CD8-positive, alpha-beta T cell (primary cell): ENCODE measurements at regions of chr6 and their contacts with region 1.

Region 1: DNA sequence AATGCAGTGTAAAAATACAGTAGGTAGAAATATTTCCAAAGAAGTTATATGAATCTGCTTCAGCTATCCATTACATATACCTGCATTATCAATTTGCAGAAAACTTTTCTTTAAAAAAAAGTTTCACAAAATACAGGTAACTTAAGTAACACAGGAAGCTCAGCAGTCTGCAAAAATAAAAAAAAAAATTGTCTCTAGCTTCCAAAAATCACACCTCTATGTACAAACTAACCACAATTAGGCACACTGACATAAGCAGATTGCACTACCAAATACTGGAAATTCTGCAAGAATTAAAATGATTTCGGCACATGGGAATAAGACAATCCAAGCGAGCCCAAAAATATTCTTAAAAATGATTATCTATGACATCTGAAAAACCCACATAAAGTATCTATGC is 41.2 kb downstream of the ME1 start:
- DNase-seq: peak in 1 of 9 experiments; percentile 8
- ATAC-seq: no peak
- H3K4me3 ChIP-seq: no peak overlapping the region
- H3K4me3 Mint-ChIP-seq: no peak overlapping the region
- H3K27ac ChIP-seq: no peak overlapping the region
- H3K27ac Mint-ChIP-seq: no peak overlapping the region
- H3K4me1 ChIP-seq: no peaks in the 10 kb centered on the region
- H3K4me1 Mint-ChIP-seq: no peaks in the 10 kb centered on the region
- H3K27me3 ChIP-seq: no peaks in the 10 kb centered on the region
- H3K27me3 Mint-ChIP-seq: no peaks in the 10 kb centered on the region
- CTCF ChIP-seq: no peak

Region 2: DNA sequence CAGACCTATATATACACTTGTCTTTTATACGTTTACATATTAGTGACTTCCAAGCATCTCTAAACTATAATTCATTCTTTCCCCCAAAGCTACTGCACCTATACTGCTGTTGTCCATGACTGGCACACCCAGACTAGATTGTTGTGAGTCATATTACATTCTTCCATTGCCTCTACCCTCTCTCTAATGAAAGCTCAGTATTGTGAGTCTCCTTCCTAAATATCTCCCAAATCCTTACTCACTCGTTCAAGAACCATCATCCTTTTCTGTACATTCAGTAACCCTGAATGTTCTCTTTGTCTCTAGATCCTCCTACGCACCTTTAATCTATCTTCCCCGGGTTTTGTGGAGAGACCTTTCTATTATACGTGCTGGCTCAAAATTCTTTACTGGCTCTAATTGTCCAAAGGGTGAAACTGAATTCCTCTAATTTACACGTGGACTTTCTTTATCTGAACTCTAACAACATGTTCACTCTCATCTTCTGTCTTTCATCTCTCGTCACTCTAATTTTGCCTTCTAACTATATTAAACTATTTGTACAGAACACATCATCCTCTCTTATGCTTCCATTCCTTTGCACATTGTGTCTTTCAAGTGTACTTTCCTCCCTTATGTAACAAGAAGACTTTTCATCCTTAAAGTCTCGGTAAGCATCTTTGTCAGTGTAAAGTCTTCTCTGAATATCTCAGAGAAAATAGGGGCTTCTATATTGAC is 1251.4 kb before region 1 on chr6:
- CTCF ChIA-PET with region 1: no interaction called
- POLR2A ChIA-PET with region 1: no interaction called
- intact Hi-C with region 1: no loop called
- DNase-seq: no peak
- ATAC-seq: no peak
- H3K4me3 ChIP-seq: no peak overlapping the region
- H3K4me3 Mint-ChIP-seq: no peak overlapping the region
- H3K27ac ChIP-seq: no peak overlapping the region
- H3K27ac Mint-ChIP-seq: no peak overlapping the region
- H3K4me1 ChIP-seq: no peaks in the 10 kb centered on the region
- H3K4me1 Mint-ChIP-seq: no peaks in the 10 kb centered on the region
- H3K27me3 ChIP-seq: peaks cover 0 to 3% of the 10 kb centered on the region in 2 experiments
- H3K27me3 Mint-ChIP-seq: no peaks in the 10 kb centered on the region
- CTCF ChIP-seq: no peak

Region 3: DNA sequence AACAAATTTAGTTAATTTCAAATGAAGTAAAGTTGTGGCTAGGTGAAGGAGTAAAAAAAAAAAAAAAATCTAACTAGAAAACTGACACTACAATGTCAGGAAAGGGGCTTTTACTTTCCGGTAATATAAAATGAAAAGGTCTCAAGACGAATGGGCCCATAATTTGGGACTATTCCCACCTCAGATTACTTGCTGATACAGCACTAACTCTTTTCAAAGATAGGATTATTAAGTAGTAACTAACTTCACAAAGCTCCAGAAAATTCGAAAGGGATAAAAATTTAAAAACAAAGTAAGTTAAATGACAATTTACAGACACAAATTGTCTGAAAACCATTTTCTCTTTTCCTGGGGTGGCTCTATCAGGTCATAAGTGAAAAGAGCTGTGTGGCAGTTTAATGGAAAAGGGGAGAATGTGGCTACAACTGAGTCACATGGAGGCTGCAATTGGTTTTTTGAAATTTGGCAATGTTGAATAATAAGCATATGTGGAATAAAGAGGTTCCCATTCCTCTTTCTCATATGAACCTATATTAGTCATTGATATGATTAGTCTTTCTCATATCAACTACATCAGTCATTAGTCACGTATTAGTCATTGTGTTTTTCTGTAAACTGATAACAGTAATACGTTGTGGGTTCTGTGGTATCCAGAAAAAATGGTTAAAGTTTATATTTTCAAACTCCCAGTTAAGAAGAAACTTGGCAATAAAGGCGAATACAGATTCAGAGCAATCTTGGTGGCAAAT is 118.5 kb before region 1 on chr6:
- CTCF ChIA-PET with region 1: no interaction called
- POLR2A ChIA-PET with region 1: no interaction called
- intact Hi-C with region 1: no loop called
- DNase-seq: no peak
- ATAC-seq: no peak
- H3K4me3 ChIP-seq: no peak overlapping the region
- H3K4me3 Mint-ChIP-seq: no peak overlapping the region
- H3K27ac ChIP-seq: no peak overlapping the region
- H3K27ac Mint-ChIP-seq: no peak overlapping the region
- H3K4me1 ChIP-seq: no peaks in the 10 kb centered on the region
- H3K4me1 Mint-ChIP-seq: no peaks in the 10 kb centered on the region
- H3K27me3 ChIP-seq: no peaks in the 10 kb centered on the region
- H3K27me3 Mint-ChIP-seq: peaks cover 2% of the 10 kb centered on the region
- CTCF ChIP-seq: no peak

Region 4: DNA sequence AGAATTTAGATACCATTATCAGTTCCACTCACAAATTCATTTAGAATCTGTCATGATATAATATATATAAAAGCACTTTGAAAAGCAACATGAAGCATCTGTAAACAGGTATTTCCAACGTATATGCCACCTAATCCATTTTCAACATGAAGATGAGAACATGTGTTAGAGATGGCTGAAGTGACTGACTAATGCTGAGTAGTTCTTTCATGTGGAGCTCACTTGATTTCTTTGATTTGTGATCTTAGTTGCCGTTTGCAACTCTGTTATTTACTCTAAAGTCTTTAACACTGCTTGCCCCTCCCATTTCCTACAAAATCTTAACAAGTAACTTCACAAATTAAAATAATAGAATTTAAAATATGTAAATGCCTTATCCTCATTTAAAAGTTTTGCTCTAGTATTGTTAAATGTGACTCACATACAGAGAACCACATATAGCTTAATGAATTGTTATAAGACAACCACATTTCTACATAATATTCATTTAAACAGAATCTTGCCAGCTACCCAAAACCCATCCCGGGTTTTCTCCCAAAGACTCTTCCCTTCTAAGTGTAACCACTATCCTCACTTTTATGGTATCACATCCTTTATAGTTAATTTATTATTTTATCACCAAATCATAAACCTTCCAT is 37.1 kb before region 1 on chr6:
- CTCF ChIA-PET with region 1: no interaction called
- POLR2A ChIA-PET with region 1: no interaction called
- intact Hi-C with region 1: loop called in 1 of 2 experiments (anchors 1 kb)
- DNase-seq: no peak
- ATAC-seq: no peak
- H3K4me3 ChIP-seq: no peak overlapping the region
- H3K4me3 Mint-ChIP-seq: no peak overlapping the region
- H3K27ac ChIP-seq: no peak overlapping the region
- H3K27ac Mint-ChIP-seq: no peak overlapping the region
- H3K4me1 ChIP-seq: no peaks in the 10 kb centered on the region
- H3K4me1 Mint-ChIP-seq: no peaks in the 10 kb centered on the region
- H3K27me3 ChIP-seq: no peaks in the 10 kb centered on the region
- H3K27me3 Mint-ChIP-seq: no peaks in the 10 kb centered on the region
- CTCF ChIP-seq: no peak

Region 5: DNA sequence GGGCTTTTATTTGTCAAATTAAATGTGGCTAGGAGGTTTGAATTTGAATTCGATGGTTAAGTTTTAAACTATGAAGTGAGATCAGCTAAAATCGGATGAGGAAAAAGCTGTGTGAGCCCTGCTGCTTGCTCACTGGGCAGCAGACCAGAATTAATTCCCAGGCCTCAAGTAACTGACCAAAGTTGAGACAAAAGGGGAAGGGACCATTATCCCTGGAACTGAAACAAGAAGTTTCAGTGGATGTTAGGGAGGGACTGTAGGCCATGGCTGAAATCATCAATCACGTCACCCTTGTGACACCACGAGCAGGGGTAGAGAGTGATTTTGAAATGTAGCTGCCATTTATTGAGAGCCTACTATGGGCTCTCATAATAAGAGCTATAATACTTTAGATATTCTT is 115.8 kb after region 1 on chr6:
- CTCF ChIA-PET with region 1: no interaction called
- POLR2A ChIA-PET with region 1: no interaction called
- intact Hi-C with region 1: no loop called
- DNase-seq: no peak
- ATAC-seq: no peak
- H3K4me3 ChIP-seq: no peak overlapping the region
- H3K4me3 Mint-ChIP-seq: no peak overlapping the region
- H3K27ac ChIP-seq: no peak overlapping the region
- H3K27ac Mint-ChIP-seq: no peak overlapping the region
- H3K4me1 ChIP-seq: no peaks in the 10 kb centered on the region
- H3K4me1 Mint-ChIP-seq: no peaks in the 10 kb centered on the region
- H3K27me3 ChIP-seq: no peaks in the 10 kb centered on the region
- H3K27me3 Mint-ChIP-seq: no peaks in the 10 kb centered on the region
- CTCF ChIP-seq: no peak